Activated CD4-positive, alpha-beta T cell treated with anti-CD3 and anti-CD28 coated beads, Interleukin-2, amount 10 ng/mL, durations not matched to agents 24 days and 14 days (primary cell): ENCODE measurements at regions of chr19 and their contacts with region 1.

Region 1: DNA sequence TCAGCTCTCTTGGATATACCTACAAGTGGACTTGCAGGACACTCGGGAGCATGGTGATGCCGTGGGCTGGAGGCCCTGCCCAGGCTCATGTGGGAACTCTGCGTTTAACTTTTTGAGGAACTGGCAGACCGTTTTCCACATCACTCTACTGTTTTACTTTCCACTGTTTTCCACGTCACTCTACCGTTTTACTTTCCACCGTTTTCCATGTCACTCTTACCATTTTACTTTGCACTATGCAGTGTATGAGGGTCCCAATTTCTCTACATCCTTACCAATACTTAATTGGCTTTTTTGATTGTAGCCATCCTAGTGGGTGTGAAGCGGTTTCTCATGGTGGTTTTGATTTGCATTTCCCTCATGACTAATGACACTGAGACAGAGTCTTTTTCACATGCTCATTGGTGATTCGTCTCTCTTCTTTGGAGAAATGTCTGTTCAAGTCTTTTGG is 40.5 kb downstream of the GATAD2A start:
- DNase-seq: peak; percentile 70
- H3K4me3 Mint-ChIP-seq: peak overlapping the region; percentile 49
- H3K27ac Mint-ChIP-seq: peak overlapping the region; percentile 79
- H3K4me1 Mint-ChIP-seq: peaks cover 59% of the 10 kb centered on the region
- H3K27me3 Mint-ChIP-seq: no peaks in the 10 kb centered on the region

Region 2: DNA sequence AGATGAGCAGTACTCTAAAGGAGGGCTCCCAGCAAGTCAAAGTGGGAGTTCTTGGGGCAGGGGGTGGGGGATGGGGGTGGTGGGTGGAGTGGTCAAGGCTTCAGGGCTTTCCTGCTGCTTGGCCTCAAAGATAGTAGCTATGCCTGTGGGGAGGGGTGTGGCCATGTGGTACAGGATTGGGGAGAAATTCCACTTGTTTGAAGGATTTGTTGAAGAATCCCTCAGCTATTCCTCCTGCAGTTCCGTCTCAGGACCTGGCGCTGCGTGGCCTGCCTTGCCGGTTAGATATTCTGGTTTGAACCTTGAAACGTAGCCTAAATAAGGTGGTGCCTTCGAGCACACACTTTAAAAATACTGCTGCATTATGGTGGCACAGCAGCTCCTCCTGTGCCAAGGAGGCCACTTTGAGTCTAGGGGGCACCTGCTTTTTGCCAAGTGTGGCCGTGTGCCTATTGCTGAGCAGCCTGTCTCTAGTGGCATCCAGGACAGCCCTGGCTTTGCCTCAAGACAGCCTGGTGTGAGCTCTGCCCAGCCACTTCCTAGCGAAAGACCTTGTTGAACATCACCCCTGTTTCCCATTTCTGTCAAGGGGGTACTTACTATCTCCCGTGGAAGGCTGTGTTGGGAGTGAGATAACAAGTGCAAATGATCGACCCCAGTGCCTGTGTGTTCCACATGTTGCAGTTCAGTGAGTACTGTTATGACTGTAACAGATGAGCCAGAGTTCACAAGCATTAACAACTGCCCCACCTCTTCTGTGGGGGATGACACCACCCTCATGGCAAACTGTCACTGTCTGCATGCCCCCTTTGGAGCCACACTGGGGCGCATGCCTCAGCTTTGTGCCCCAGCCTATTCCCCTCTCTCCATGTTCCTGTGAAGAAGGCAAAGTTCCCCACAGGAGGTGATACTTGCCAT is 35.4 kb before region 1 on chr19:
- intact Hi-C with region 1: loop called (anchors 2 kb)
- DNase-seq: peak; percentile 62
- H3K4me3 Mint-ChIP-seq: no peak overlapping the region
- H3K27ac Mint-ChIP-seq: peak overlapping the region; percentile 68
- H3K4me1 Mint-ChIP-seq: peaks cover 57% of the 10 kb centered on the region
- H3K27me3 Mint-ChIP-seq: no peaks in the 10 kb centered on the region